Heart right ventricle (tissue), 16 donors: ENCODE measurements at regions of chr2 and their contacts with region 1.

Region 1: DNA sequence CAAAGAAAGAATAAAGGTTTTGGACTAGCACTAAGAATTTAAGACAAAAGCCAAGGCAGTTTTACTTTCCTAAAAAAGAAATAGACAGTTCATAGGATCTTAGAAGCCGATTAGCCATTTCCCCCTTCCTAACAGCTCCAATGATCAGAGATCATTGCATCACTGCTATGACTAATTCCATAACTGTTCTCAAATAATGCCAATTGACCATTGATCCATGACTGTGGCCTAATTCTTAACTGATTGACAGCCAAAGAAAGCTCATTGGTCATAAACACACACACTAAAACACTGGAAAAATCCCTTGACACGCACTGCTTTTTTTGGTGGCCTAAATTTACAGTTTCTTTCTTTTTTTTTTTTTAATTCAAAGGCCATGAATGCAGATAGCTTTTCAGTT is 345.0 kb upstream of the ACVR2A start:
- DNase-seq: no peak
- ATAC-seq: no peak
- H3K4me3 ChIP-seq: no peak overlapping the region
- H3K27ac ChIP-seq: peak overlapping the region in 6 of 10 donors; percentile 15 to 76 (median 48)
- H3K4me1 ChIP-seq: peaks cover 0 to 14% (median 5%) of the 10 kb centered on the region in 9 donors
- H3K27me3 ChIP-seq: no peaks in the 10 kb centered on the region
- CTCF ChIP-seq: no peak

Region 2: DNA sequence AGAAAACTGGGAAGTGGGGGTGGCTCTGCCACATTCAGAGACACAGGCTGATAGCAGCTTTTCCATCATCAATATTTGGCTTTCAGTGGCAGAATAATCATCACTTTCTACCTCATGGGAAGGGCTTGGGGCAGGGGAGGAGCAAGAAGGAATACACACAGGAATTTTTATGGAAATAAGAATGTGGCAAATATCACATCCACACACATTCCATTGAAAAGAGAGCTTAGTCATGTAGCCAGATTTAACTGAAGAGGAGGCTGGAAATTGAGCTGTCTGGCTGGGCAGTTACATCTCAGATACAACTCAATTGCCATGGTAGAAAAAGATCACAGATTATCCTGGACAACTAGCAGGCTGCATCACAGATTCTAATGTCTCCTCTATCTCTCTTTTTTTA is 1129.0 kb before region 1 on chr2:
- intact Hi-C with region 1: no loop called
- DNase-seq: no peak
- ATAC-seq: no peak
- H3K4me3 ChIP-seq: no peak overlapping the region
- H3K27ac ChIP-seq: no peak overlapping the region
- H3K4me1 ChIP-seq: no peaks in the 10 kb centered on the region
- H3K27me3 ChIP-seq: no peaks in the 10 kb centered on the region
- CTCF ChIP-seq: no peak

Region 3: DNA sequence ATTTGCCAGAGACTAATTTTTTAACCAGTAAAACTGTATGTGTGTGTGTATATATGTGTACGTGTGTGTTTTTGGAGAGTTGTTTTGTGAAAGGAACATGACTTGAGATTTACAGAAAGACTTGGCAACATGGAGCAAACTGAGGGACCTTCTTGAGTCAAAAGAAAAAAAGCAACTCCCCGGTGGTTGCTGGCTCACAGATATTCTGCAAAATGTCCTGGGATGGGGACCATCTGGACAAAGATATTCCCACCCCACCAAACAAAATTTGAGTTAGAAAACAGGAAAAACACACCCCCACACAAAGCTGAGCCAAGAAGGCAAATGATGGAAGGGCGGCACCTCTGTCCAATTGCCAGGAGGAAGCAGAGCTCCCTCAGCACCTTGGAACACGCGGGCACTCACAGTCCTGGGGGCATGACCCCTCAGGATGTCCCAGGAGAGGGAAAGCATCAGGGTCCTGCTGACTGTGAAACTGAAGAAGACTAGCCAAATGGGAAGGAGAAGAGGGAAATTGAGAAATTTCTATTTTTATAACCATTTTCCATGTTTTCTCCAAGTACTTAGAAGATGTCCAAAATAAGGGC is 54.8 kb after region 1 on chr2:
- intact Hi-C with region 1: loop called in 1 of 10 experiments (anchors 5 kb)
- DNase-seq: peak; percentile 34 to 36
- ATAC-seq: peak; percentile 44 to 85 (median 79)
- H3K4me3 ChIP-seq: no peak overlapping the region
- H3K27ac ChIP-seq: peak overlapping the region in 8 of 10 donors; percentile 0 to 74 (median 58)
- H3K4me1 ChIP-seq: peaks cover 0 to 27% (median 11%) of the 10 kb centered on the region in 9 donors
- H3K27me3 ChIP-seq: no peaks in the 10 kb centered on the region
- CTCF ChIP-seq: no peak